AG04449 (cell line): ENCODE measurements at regions of chr1 and their contacts with region 1.

Region 1: GRCh38 chr1:92994105-92994712 is 32.9 kb upstream of the DIPK1A start:
- DNase-seq: peak; percentile 46
- H3K4me3 ChIP-seq: no peak overlapping the region
- CTCF ChIP-seq: peak; percentile 55

Region 2: DNA sequence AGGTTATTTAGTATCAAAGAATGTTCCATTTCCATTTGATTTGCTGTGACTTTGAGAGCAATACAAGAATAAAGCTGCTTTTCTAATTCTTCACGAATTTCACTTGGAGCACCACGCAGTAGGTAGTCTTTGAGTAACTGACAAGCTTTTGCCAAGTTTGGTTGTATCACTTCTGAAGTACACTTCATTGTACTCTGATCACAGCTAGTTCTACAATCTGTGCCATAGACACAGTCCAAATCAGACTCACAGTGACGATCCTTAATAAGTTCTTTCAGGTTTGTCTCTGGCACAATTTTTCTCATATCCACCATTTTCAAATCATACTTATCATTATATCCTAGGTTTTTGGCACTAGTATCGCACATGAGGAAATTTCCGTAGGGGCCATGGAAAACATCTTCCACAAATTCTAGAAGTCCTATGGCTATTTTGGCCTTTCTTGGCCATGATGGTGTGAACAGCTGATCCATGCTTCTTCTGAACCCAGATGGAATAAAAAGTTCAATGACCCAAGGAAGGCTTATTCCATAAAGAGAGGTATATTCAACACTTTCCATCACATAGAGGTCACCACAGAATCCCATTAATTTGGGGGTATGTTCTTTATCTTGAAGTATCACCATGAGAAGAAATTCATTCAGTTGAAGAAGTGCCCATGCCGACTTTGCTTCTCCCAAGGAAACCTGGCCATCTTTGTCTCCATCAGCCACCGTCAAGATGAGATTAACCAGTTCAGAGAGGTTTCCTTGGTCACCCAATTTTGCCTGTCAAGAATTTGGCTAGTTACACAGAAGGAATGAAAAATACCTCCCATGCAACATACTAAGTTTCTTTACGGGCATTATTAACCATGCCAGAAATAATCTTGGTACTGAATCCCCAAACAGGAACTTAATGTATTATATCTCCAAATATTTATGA is 150.5 kb before region 1 on chr1:
- CTCF ChIA-PET with region 1: interaction called, 28 read pairs
- POLR2A ChIA-PET with region 1: no interaction called
- DNase-seq: no peak
- H3K4me3 ChIP-seq: no peak overlapping the region
- CTCF ChIP-seq: no peak

Region 3: GRCh38 chr1:92882819-92883218 is 111.4 kb before region 1 on chr1:
- CTCF ChIA-PET with region 1: interaction called, 13 read pairs
- POLR2A ChIA-PET with region 1: no interaction called
- DNase-seq: no peak
- H3K4me3 ChIP-seq: no peak overlapping the region
- CTCF ChIP-seq: no peak

Region 4: DNA sequence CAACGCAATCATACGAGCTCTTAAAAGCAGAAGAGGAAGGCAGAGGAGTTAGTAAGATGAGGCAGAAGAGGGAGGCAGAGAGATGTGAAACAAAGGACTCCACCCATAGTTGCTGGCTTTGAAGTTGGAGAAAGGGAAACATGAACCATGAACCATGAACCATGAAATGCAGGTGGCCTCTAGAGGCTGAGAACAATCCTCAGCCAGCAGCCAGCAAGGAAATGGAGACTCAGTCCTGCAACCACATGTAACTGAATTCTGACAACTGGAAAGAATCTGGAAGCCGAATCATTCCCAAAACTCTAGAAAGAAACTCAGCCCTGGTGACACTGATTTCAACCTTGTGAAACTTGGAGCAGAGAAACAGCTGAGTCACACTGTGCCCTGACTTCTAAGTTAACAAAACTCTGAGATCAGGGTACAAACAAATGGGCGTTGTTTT is 43.0 kb before region 1 on chr1:
- CTCF ChIA-PET with region 1: interaction called, 20 read pairs
- POLR2A ChIA-PET with region 1: no interaction called
- DNase-seq: no peak
- H3K4me3 ChIP-seq: no peak overlapping the region
- CTCF ChIP-seq: no peak

Region 5: GRCh38 chr1:92975551-92976232 is 18.5 kb before region 1 on chr1:
- CTCF ChIA-PET with region 1: interaction called, 22 read pairs
- POLR2A ChIA-PET with region 1: no interaction called
- DNase-seq: no peak
- H3K4me3 ChIP-seq: no peak overlapping the region
- CTCF ChIP-seq: no peak

Region 6: GRCh38 chr1:93015590-93015989 is 21.4 kb after region 1 on chr1:
- CTCF ChIA-PET with region 1: interaction called, 21 read pairs
- POLR2A ChIA-PET with region 1: no interaction called
- DNase-seq: peak; percentile 24
- H3K4me3 ChIP-seq: no peak overlapping the region
- CTCF ChIP-seq: no peak

Region 7: DNA sequence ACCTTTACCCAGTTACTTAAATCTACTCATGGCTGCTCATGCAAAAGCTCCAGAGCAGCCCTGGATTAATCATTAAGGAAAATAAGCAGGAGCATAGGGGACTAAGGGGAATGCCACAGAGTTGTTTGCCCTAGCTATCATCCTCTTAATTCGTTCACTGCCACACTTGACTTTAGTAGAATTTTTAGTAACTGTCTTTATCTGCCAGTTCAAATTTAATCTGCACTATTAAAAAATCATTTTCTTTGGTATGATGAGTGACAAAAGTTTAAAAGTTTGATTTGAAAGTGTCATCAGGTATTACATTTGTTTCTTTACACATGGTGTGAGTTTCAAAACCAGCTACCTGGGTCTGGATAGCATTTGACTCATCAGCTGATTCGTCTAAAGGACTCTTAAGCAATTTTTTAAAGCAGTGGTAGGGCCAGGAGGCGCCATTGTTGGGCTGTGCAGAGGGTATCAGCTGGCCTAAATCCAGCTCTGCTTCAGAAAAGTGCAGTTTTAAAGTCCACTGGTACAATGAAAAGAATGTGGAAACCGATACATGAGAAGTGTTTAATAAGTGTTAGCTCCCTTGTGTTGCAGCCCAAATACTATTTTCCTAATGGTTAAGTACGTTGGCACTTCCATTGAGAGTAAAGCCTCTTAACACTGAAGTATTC is 281.6 kb after region 1 on chr1:
- CTCF ChIA-PET with region 1: no interaction called
- POLR2A ChIA-PET with region 1: no interaction called
- DNase-seq: no peak
- H3K4me3 ChIP-seq: no peak overlapping the region
- CTCF ChIP-seq: no peak